ENCODE measurements at regions of chr10 and their contacts with region 1.

Region 1: DNA sequence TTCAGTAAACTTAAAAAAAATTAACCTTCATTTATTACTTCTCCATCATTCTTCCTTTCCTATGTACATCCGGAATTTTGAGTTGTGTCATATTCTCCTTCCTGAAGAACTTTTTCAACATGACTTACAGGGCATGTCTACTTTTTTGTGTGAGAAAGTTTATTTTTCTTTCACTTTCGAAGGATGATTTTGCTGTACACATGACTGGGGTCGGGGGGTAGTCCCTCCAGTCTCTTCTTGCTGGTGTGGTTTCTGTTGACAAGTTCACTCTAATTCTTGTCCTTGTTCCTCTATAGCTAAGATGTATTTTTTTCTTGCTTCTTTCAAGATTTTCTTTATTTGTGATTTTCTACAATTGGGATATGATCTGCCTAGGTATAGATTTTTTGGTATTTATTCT is 55.8 kb downstream of the INPP5A start:
- DNase-seq: no peak
- H3K4me3 ChIP-seq: no peak overlapping the region
- H3K4me3 Mint-ChIP-seq: peak overlapping the region; percentile 41
- H3K27ac Mint-ChIP-seq: peak overlapping the region; percentile 58
- H3K4me1 ChIP-seq: peaks cover 46% of the 10 kb centered on the region
- H3K4me1 Mint-ChIP-seq: peaks cover 47% of the 10 kb centered on the region
- H3K27me3 ChIP-seq: no peaks in the 10 kb centered on the region
- H3K27me3 Mint-ChIP-seq: no peaks in the 10 kb centered on the region
- CTCF ChIP-seq: no peak

Region 2: GRCh38 chr10:132575356-132576201 is 17.8 kb before region 1 on chr10:
- CTCF ChIA-PET with region 1: no interaction called
- POLR2A ChIA-PET with region 1: no interaction called
- intact Hi-C with region 1: loop called (anchors 1 kb)
- DNase-seq: peak; percentile 58 to 75
- H3K4me3 ChIP-seq: no peak overlapping the region
- H3K4me3 Mint-ChIP-seq: no peak overlapping the region
- H3K27ac Mint-ChIP-seq: peak overlapping the region; percentile 26
- H3K4me1 ChIP-seq: peaks cover 33% of the 10 kb centered on the region
- H3K4me1 Mint-ChIP-seq: peaks cover 10% of the 10 kb centered on the region
- H3K27me3 ChIP-seq: no peaks in the 10 kb centered on the region
- H3K27me3 Mint-ChIP-seq: no peaks in the 10 kb centered on the region
- CTCF ChIP-seq: no peak